ENCODE measurements at regions of chr3 and their contacts with region 1.

Region 1: GRCh38 chr3:48151058-48151806 is 37.0 kb downstream of the CDC25A start:
- DNase-seq: no peak
- H3K4me3 ChIP-seq: no peak overlapping the region
- H3K27ac ChIP-seq: peak overlapping the region; percentile 49
- H3K4me1 ChIP-seq: peaks cover 19% of the 10 kb centered on the region
- H3K27me3 ChIP-seq: no peaks in the 10 kb centered on the region
- CTCF ChIP-seq: peak; percentile 52 to 65 (median 57)
- POLR2A ChIP-seq: no peak

Region 2: DNA sequence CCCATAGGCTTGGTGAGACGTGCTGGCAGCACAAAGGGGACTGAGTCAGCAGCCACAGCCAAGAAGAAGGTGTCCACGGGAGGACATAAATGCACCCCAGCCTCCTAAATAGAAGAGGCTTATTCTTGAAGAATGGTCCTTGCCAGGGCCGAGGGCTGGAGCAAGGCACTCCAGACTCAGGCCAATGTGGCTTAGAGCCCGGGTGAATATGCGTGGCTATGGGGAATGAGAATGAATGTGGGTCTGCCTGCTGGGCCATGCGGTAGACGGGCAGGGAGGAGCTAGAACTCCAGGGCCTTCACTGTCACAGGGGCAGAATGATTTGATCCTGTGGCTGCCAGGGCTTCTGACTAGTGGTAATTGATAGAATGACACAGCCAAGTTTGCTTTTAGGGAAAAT is 314.2 kb before region 1 on chr3:
- intact Hi-C with region 1: loop called (anchors 5 kb)
- DNase-seq: no peak
- H3K4me3 ChIP-seq: no peak overlapping the region
- H3K27ac ChIP-seq: no peak overlapping the region
- H3K4me1 ChIP-seq: no peaks in the 10 kb centered on the region
- H3K27me3 ChIP-seq: no peaks in the 10 kb centered on the region
- CTCF ChIP-seq: no peak
- POLR2A ChIP-seq: no peak

Region 3: DNA sequence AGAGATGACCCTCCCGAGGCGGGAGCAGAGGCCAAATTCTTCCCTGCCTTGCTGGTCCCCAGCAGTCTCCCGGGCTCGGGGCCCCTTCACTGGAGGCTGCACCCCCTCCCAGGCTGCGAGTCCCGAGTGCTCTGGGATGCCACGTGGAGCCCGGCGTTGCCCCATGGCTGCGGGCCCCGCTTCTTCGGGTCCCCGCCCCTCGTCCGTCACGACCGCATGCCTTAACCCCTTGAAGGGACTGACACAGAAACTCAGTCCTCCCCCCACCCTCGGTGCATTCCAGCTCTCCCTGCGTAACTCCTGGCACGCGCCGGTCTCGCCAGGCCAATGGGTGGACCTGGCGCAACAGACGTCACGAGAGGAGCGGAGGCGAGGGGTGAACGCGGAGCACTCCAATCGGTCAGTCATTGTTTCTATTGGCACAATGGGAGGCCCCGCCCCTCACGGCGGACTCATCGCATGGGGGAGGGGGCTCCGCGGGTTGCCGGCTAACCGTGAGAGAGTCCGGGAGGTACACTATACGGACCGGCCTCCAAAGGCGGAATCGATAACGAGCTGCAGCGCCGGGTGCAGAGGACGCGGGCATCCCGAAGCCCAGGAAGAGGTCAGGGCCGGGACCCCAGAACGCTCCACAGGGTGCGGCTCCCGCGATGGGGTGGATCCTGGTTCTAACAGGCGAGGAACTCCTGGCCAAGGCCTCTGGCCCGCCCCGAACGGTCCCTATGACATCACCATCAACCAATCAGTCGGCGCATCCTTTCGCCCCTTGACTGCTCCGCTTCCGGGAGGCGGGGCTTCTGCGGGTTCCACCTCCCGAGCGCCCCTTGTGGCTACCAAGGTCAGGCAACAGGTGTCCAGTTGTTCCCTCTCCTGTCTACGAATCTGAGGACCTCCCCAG is 512.4 kb after region 1 on chr3:
- intact Hi-C with region 1: no loop called
- DNase-seq: peak in 1 of 2 donors; percentile 93
- H3K4me3 ChIP-seq: peak overlapping the region; percentile 47 to 56
- H3K27ac ChIP-seq: peak overlapping the region; percentile 18
- H3K4me1 ChIP-seq: peaks cover 16% of the 10 kb centered on the region
- H3K27me3 ChIP-seq: peaks cover 4% of the 10 kb centered on the region
- CTCF ChIP-seq: no peak
- POLR2A ChIP-seq: no peak

Region 4: DNA sequence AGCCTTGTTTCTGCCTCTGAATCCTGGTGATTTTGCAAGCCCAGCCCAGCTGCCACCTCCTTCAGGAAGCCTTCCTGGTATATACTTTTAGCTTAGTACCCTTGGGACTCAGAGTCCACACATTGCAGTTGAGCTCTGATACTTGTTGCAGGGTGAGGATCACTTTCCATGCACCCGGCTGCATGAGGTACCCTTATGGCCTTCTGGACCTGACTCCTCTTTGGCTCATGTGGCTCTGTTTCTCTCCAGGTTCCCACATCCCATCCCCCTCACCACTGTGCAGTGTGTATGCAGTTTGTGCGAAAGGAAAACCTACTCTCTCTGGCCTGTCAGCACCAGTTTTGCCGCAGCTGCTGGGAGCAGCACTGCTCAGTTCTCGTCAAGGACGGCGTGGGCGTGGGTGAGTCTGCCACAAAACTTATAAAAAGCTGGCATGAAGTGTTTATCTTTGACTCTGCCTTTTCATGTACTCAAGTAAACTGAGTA is 815.7 kb after region 1 on chr3:
- intact Hi-C with region 1: no loop called
- DNase-seq: no peak
- H3K4me3 ChIP-seq: no peak overlapping the region
- H3K27ac ChIP-seq: no peak overlapping the region
- H3K4me1 ChIP-seq: no peaks in the 10 kb centered on the region
- H3K27me3 ChIP-seq: no peaks in the 10 kb centered on the region
- CTCF ChIP-seq: no peak
- POLR2A ChIP-seq: no peak

Measured in vagina (tissue), 2 donors.